ENCODE measurements at regions of chr4 and their contacts with region 1.

Region 1: DNA sequence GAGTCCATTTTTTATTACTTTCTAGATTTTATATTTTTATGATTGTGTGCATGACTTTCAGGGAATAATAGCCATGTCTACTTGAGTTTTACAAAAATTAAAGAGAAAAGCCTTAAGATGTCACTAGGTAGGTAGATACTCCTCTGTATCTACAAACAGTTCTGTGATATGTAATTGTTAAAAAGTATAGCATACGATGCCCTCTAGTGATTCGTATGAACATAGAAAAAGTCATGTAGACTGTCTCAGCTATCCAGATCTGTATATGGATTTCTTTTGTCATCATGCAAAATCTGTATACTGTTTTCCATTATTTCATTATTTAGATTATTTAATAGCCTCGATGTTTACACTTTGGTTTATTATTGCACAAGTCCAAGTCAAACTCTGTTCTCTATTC is 856.6 kb downstream of the CENPC start:
- DNase-seq: no peak
- H3K4me3 Mint-ChIP-seq: no peak overlapping the region
- H3K27ac Mint-ChIP-seq: no peak overlapping the region
- H3K4me1 Mint-ChIP-seq: no peaks in the 10 kb centered on the region
- H3K27me3 Mint-ChIP-seq: no peaks in the 10 kb centered on the region

Region 2: DNA sequence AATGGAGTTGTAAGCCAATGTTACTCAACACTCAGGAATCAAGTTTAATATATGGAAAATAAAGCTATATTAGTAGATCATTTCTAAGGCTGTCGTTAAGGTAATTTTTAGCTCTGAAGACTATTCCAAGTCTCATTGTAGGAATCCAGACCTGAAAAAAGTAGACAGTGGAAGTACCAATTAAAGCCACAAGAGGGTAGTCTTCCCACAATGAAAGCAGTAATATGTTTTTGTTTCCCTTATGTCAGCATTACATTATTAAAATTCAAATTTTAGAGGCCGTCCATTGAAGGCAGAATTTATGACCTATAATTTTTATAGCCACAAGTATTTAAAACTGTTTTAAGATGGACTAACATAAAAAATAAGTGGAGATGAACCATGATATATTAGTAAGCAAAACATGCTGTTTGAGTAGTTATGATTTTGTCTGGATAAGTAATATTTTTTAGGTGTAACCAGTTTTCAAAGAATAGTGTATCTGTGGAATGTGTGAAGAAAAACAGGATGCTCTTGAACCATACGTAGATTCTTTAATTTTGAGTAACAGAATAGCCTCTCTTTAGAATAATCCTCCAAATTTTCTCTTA is 1906.8 kb before region 1 on chr4:
- CTCF ChIA-PET with region 1: no interaction called
- intact Hi-C with region 1: loop called (anchors 2 kb)
- DNase-seq: no peak
- H3K4me3 Mint-ChIP-seq: no peak overlapping the region
- H3K27ac Mint-ChIP-seq: no peak overlapping the region
- H3K4me1 Mint-ChIP-seq: no peaks in the 10 kb centered on the region
- H3K27me3 Mint-ChIP-seq: no peaks in the 10 kb centered on the region